ENCODE measurements at regions of chr2 and their contacts with region 1.

Region 1: DNA sequence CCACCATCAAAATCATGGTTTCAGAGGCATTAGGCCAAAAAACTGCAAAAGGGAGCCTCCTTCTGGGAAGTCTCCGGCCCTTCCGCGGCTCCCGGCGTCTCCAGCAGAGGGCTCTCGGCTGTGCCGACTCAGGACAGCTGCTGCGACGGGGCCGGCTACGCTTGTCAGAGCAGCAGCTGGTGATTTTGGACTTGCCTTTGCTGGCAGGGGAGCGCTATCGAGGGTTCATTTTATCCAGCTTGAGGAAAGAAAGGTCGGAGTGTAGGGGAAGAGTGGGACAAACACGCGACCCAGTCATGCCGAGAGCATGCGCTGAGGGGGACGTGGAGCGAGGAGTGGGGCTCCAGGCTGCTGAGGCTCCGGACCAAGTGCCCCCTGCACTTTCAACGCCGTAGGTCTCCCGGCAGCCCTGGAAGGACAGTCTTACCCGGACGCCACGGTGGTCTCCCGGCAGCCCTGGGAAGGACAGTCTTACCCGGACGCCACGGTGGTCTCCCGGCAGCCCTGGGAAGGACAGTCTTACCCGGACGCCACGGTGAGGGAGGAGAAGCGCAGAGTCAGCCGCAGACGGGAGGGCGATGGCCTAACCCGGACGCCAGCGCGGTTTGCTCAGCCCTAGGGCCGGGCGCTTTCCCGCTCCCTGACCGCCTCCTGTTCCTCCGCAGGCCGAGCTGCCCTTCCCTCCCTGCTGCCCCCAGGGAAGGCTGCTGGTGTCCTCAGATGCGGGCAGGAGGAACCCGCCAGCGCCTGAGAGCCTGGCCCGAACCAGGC is 21.7 kb downstream of the DDX18 start:
- DNase-seq: peak; percentile 91
- ATAC-seq: peak; percentile 97

Region 2: DNA sequence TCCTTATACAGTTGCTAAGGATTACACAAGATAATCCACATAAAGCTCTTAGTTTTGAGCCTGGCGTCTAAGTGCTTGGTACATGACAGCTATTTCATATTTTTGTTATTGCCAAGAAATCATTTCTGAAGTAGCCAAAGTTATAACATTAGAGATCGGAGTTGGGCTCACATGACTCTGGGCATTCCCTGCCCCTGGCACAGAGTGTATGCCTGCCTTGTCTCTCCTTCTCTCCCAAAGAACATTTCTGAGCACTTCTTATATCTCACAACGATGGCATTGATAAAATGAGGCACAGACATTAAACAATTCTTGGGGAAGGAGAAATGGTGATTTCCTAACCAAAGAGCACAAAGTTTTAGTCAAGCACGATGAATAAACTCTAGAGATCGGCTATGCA is 109.4 kb before region 1 on chr2:
- intact Hi-C with region 1: no loop called
- DNase-seq: no peak
- ATAC-seq: no peak

Region 3: DNA sequence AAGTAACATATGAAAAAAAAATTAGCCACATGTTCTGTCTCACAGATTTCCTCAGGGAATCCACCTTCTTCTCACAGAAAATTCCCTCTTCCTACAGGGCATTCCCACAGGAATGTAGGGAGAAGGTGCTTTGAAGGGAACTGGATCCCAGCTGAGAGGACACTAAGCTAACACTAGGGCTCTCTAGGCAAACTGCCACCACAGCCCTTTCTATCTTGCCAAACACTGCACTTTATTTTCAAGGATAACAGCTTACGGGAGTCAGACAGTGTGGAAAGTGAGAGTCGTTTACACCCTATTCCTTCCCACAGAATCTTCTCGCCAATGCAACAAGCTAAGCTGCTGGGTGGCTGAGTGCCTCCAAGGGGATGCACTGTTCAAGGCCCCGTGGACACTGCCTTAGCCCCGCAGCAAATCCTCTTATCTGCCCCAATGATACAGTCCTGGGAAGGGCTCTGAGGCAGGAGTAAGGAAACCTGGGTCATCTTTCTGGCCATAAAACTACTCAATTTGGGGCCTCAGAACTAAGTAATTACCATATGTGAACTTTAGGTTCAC is 100.8 kb after region 1 on chr2:
- intact Hi-C with region 1: loop called (anchors 10 kb)
- DNase-seq: no peak
- ATAC-seq: peak; percentile 75